Naive thymus-derived CD4-positive, alpha-beta T cell (primary cell): ENCODE measurements at regions of chr14 and their contacts with region 1.

Region 1: GRCh38 chr14:23112359-23113178 is 6.5 kb downstream of the CEBPE start:
- DNase-seq: no peak
- ATAC-seq: peak; percentile 80
- H3K4me3 ChIP-seq: no peak overlapping the region
- H3K4me3 Mint-ChIP-seq: no peak overlapping the region
- H3K27ac ChIP-seq: no peak overlapping the region
- H3K27ac Mint-ChIP-seq: no peak overlapping the region
- H3K4me1 ChIP-seq: peaks cover 0 to under 1% of the 10 kb centered on the region in 2 donors
- H3K4me1 Mint-ChIP-seq: peaks cover 3 to 31% (median 11%) of the 10 kb centered on the region in 7 donors
- H3K27me3 ChIP-seq: no peaks in the 10 kb centered on the region
- H3K27me3 Mint-ChIP-seq: peaks cover 0 to 9% (median 0%) of the 10 kb centered on the region in 5 donors

Region 2: GRCh38 chr14:23006544-23007419 is 105.8 kb before region 1 on chr14:
- CTCF ChIA-PET with region 1: no interaction called
- POLR2A ChIA-PET with region 1: no interaction called
- intact Hi-C with region 1: no loop called
- DNase-seq: peak; percentile 88 to 99 (median 98)
- ATAC-seq: peak; percentile 97
- H3K4me3 ChIP-seq: peak overlapping the region; percentile 94
- H3K4me3 Mint-ChIP-seq: peak overlapping the region; percentile 91 to 100 (median 96)
- H3K27ac ChIP-seq: peak overlapping the region; percentile 86
- H3K27ac Mint-ChIP-seq: peak overlapping the region; percentile 87 to 99 (median 98)
- H3K4me1 ChIP-seq: peaks cover 9 to 25% of the 10 kb centered on the region in 2 donors
- H3K4me1 Mint-ChIP-seq: peaks cover 12 to 60% (median 48%) of the 10 kb centered on the region in 7 donors
- H3K27me3 ChIP-seq: no peaks in the 10 kb centered on the region
- H3K27me3 Mint-ChIP-seq: no peaks in the 10 kb centered on the region

Region 3: GRCh38 chr14:23076785-23077408 is 35.7 kb before region 1 on chr14:
- CTCF ChIA-PET with region 1: interaction called, 9 read pairs
- POLR2A ChIA-PET with region 1: interaction called, 16 read pairs
- intact Hi-C with region 1: loop called in 1 of 2 experiments (anchors 1 kb)
- DNase-seq: peak in 5 of 9 donors; percentile 33 to 55 (median 49)
- ATAC-seq: peak; percentile 63
- H3K4me3 ChIP-seq: no peak overlapping the region
- H3K4me3 Mint-ChIP-seq: no peak overlapping the region
- H3K27ac ChIP-seq: peak overlapping the region; percentile 3
- H3K27ac Mint-ChIP-seq: peak overlapping the region in 2 of 9 donors; percentile 47 to 57
- H3K4me1 ChIP-seq: peaks cover 1 to 2% of the 10 kb centered on the region in 2 donors
- H3K4me1 Mint-ChIP-seq: peaks cover 8 to 28% (median 17%) of the 10 kb centered on the region in 7 donors
- H3K27me3 ChIP-seq: no peaks in the 10 kb centered on the region
- H3K27me3 Mint-ChIP-seq: no peaks in the 10 kb centered on the region